ENCODE measurements at regions of chr7 and their contacts with region 1.

Region 1: GRCh38 chr7:1812509-1813393 is 142.7 kb downstream of the ELFN1 start:
- DNase-seq: no peak

Region 2: GRCh38 chr7:1794888-1795542 is 17.7 kb before region 1 on chr7:
- intact Hi-C with region 1: loop called in 1 of 2 experiments (anchors 1 kb)
- DNase-seq: no peak

Region 3: DNA sequence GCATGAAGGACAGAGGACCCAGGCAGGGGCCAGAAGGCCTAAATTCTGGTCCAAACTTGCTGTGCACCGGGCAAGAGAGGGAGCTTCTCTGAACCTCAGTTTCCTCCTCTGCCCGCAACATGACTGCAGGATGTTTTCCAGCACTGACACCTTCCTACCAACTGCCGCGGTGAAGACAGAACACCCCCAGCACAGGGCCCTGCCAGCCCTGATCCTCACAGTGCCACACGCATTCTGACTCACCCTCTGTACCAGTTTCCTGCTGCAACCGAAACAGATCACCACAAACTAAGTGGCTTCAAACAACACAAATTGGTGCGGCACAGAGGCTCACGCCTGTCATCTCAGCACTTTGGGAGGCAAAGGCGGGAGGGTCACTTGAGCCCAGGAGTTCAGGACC is 401.9 kb after region 1 on chr7:
- intact Hi-C with region 1: loop called in 1 of 2 experiments (anchors 2 kb)
- DNase-seq: no peak